Calu3 (cell line): ENCODE measurements at regions of chr3 and their contacts with region 1.

Region 1: GRCh38 chr3:188954590-188955208 is 217.1 kb upstream of the TPRG1 start:
- DNase-seq: peak; percentile 94
- H3K4me3 Mint-ChIP-seq: no peak overlapping the region
- H3K27ac Mint-ChIP-seq: no peak overlapping the region
- H3K4me1 Mint-ChIP-seq: peaks cover 24% of the 10 kb centered on the region
- H3K27me3 Mint-ChIP-seq: no peaks in the 10 kb centered on the region
- CTCF ChIP-seq: peak; percentile 98

Region 2: GRCh38 chr3:188154014-188154808 is 800.5 kb before region 1 on chr3 and contains the start of gene LPP:
- CTCF ChIA-PET with region 1: interaction called, 3 read pairs
- intact Hi-C with region 1: loop called (anchors 5 kb)
- DNase-seq: peak; percentile 97
- H3K4me3 Mint-ChIP-seq: peak within 1 kb of the TSS; percentile 72
- H3K27ac Mint-ChIP-seq: peak within 1 kb of the TSS; percentile 86
- H3K4me1 Mint-ChIP-seq: peaks cover 56% of the 10 kb centered on the region
- H3K27me3 Mint-ChIP-seq: no peaks in the 10 kb centered on the region
- CTCF ChIP-seq: peak; percentile 21
- total RNA-seq, gene LPP: 219 and 264 TPM in 2 replicates

Region 3: GRCh38 chr3:188432802-188433520 is 521.7 kb before region 1 on chr3:
- CTCF ChIA-PET with region 1: no interaction called
- intact Hi-C with region 1: loop called (anchors 5 kb)
- DNase-seq: peak; percentile 34
- H3K4me3 Mint-ChIP-seq: peak overlapping the region; percentile 37
- H3K27ac Mint-ChIP-seq: peak overlapping the region; percentile 49
- H3K4me1 Mint-ChIP-seq: peaks cover 66% of the 10 kb centered on the region
- H3K27me3 Mint-ChIP-seq: no peaks in the 10 kb centered on the region
- CTCF ChIP-seq: no peak

Region 4: DNA sequence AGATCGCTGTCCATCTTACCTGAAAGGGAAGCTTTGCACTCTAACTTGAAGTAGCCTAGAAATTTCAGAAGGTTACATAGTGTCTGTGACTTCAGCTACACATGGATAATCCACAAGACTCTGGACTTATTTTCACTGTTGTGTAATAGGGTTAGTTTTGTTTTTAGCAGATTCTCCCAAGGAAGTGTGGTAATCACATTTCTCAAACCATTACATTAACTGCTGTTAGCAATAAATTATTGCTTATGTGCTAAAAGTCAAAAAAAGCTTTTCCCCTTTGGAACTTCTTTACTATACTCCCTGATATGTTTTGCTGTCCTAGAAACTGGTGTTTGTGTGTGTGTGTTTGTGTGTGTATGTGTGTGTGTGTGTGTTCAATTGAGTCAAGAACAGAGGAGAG is 134.8 kb before region 1 on chr3:
- CTCF ChIA-PET with region 1: no interaction called
- intact Hi-C with region 1: loop called (anchors 5 kb)
- DNase-seq: no peak
- H3K4me3 Mint-ChIP-seq: no peak overlapping the region
- H3K27ac Mint-ChIP-seq: no peak overlapping the region
- H3K4me1 Mint-ChIP-seq: peaks cover 30% of the 10 kb centered on the region
- H3K27me3 Mint-ChIP-seq: no peaks in the 10 kb centered on the region
- CTCF ChIP-seq: no peak

Region 5: DNA sequence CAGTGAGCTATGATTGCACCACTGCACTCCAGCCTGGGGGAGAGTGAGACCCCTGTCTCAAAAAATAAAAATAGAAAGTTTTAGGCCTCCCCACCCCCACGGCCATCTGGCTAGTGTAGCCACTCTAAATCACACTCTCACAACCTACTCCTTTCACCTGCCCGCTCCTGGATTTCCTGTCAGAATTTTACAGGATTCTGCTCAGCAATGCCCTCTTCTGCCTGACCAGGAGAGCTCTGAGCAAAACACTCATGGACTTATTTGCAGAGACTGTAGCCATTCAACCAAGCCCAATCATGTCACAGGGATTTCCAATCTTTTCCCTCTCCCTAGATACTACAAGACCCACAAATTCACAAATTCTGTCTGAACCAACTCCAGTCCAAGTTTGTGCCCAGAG is 25.6 kb before region 1 on chr3:
- CTCF ChIA-PET with region 1: interaction called, 10 read pairs
- intact Hi-C with region 1: no loop called
- DNase-seq: peak; percentile 44
- H3K4me3 Mint-ChIP-seq: no peak overlapping the region
- H3K27ac Mint-ChIP-seq: no peak overlapping the region
- H3K4me1 Mint-ChIP-seq: peaks cover 7% of the 10 kb centered on the region
- H3K27me3 Mint-ChIP-seq: no peaks in the 10 kb centered on the region
- CTCF ChIP-seq: no peak

Region 6: DNA sequence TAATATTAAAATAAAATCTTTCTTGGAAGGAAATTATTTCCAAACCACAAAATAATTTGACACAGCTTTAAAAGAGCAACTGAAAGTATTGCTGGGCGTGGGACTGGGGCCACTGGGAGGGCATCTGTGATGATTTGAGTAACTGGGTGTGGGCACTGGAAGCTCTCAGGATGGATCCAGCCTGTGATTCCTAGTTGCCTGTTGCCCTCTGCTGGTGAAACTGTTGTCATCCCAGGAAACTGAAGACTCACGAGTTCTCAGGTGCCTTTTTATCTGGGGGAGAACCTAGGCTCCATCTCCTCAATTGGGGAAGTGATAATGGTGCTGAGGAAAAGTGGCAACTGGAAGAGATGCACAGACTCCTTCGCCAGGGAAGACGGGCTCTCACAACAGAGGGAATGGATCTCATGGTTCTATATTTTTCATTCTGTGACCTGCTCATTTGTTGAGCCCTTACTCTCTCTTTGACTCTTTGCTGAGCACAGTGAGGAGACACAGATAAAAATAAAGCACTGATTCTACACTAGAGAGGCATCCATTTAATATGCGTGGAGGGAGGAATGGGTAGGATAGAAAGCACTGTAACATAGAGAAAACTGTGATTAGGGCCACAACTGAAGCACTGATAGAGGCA is 278.6 kb after region 1 on chr3:
- CTCF ChIA-PET with region 1: interaction called, 6 read pairs
- intact Hi-C with region 1: loop called (anchors 2 kb)
- DNase-seq: peak; percentile 84
- H3K4me3 Mint-ChIP-seq: no peak overlapping the region
- H3K27ac Mint-ChIP-seq: no peak overlapping the region
- H3K4me1 Mint-ChIP-seq: peaks cover 35% of the 10 kb centered on the region
- H3K27me3 Mint-ChIP-seq: no peaks in the 10 kb centered on the region
- CTCF ChIP-seq: peak; percentile 83